ENCODE measurements at regions of chr1 and their contacts with region 1.

Region 1: DNA sequence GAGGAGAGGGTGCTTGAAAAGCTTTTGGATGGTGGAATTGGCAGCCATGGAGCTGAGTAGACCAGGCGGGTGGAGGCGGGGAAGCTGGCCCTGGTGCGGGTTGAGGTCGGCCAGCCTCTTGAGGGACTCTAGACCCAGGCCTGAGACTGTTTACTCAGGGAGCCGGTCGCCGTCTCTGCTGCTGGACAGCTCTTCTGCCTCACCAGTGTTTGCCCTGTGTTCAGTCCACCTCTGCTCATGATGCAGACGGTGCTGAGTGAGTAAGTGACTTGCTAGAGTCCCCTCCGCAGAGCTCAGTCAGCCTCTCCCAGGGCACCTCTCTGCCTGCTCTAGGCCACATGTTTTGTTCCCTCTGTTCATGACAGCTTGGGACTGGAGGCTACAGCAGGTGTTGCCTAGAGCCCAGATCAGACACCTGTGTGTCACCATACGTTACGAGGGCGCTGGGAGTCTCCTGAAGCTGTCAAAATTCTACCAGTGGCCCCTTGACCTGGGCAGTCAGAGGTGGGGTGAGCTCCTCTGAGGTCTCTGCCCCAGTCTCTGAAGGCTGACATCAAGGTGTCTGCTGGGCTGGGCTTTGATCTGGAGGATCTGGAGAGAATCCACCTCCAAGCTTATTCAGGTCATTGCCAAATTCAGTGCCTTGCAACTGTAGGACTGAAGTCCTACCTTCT is 73.5 kb upstream of the WNT4 start:
- DNase-seq: no peak
- H3K4me3 ChIP-seq: no peak overlapping the region
- H3K27ac ChIP-seq: no peak overlapping the region
- H3K4me1 ChIP-seq: no peaks in the 10 kb centered on the region
- H3K27me3 ChIP-seq: no peaks in the 10 kb centered on the region
- CTCF ChIP-seq: no peak

Region 2: GRCh38 chr1:22153660-22154437 is 62.5 kb before region 1 on chr1:
- CTCF ChIA-PET with region 1: no interaction called
- dilution Hi-C with region 1: loop called (anchors 5 kb)
- in situ Hi-C with region 1: no loop called
- intact Hi-C with region 1: no loop called
- DNase-seq: no peak
- H3K4me3 ChIP-seq: no peak overlapping the region
- H3K27ac ChIP-seq: no peak overlapping the region
- H3K4me1 ChIP-seq: no peaks in the 10 kb centered on the region
- H3K27me3 ChIP-seq: no peaks in the 10 kb centered on the region
- CTCF ChIP-seq: no peak

Region 3: GRCh38 chr1:22259551-22260282 is 43.4 kb after region 1 on chr1:
- CTCF ChIA-PET with region 1: no interaction called
- dilution Hi-C with region 1: loop called (anchors 10 kb)
- in situ Hi-C with region 1: no loop called
- intact Hi-C with region 1: no loop called
- DNase-seq: no peak
- H3K4me3 ChIP-seq: no peak overlapping the region
- H3K27ac ChIP-seq: no peak overlapping the region
- H3K4me1 ChIP-seq: no peaks in the 10 kb centered on the region
- H3K27me3 ChIP-seq: no peaks in the 10 kb centered on the region
- CTCF ChIP-seq: no peak

Region 4: GRCh38 chr1:22509815-22510214 is 293.5 kb after region 1 on chr1:
- CTCF ChIA-PET with region 1: no interaction called
- dilution Hi-C with region 1: loop called (anchors 5 kb)
- in situ Hi-C with region 1: no loop called
- intact Hi-C with region 1: no loop called
- DNase-seq: peak; percentile 51
- H3K4me3 ChIP-seq: no peak overlapping the region
- H3K27ac ChIP-seq: no peak overlapping the region
- H3K4me1 ChIP-seq: no peaks in the 10 kb centered on the region
- H3K27me3 ChIP-seq: no peaks in the 10 kb centered on the region
- CTCF ChIP-seq: no peak

Measured in mammary epithelial cell (primary cell).